Activated naive CD4-positive, alpha-beta T cell treated with anti-CD3 and anti-CD28 coated beads for 36 hours (primary cell): ENCODE measurements at regions of chr9 and their contacts with region 1.

Region 1: DNA sequence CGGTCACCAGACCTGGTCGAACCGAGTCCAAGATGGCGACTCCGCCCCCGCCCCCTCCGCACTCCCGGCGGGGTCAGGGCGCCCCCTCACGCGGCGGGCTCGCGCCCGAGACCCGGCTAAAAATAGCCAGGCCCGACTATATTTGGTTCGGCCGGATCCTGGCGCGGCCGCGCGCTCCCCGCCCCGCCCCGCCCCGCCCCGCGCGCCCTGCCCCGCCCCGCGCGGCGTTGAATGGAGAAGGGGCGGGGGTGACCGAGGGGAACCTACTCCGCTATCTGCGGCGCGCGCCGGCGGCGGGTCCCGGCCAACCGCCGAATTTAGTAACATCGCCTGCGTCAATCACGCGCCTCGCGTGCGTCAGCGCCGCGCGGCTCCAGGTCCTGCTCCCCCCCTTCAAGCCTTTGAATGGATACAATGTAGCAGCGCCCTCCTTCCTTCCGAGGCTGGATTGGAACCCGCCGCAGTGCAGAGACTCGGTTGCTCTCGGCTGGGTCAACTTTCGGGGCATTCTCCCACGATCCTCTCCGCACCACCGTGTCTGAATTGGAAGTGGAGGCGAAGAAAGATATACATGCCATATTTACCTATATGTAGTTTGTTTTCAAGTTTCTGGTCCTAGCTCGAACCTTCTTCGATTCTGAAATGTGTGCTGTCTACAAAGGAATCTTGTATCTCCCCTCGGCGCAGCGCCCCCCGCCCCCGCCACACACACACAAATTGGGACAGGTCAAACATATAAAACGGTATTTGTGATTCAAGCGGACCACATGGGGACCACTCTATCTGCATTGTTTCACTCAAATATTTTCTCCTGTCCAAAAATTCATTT is 1.6 kb upstream of the NR4A3 start:
- DNase-seq: peak; percentile 91
- H3K4me3 Mint-ChIP-seq: peak overlapping the region; percentile 94
- H3K27ac Mint-ChIP-seq: peak overlapping the region; percentile 91
- H3K4me1 Mint-ChIP-seq: peaks cover 45% of the 10 kb centered on the region
- H3K27me3 Mint-ChIP-seq: peaks cover 17% of the 10 kb centered on the region

Region 2: DNA sequence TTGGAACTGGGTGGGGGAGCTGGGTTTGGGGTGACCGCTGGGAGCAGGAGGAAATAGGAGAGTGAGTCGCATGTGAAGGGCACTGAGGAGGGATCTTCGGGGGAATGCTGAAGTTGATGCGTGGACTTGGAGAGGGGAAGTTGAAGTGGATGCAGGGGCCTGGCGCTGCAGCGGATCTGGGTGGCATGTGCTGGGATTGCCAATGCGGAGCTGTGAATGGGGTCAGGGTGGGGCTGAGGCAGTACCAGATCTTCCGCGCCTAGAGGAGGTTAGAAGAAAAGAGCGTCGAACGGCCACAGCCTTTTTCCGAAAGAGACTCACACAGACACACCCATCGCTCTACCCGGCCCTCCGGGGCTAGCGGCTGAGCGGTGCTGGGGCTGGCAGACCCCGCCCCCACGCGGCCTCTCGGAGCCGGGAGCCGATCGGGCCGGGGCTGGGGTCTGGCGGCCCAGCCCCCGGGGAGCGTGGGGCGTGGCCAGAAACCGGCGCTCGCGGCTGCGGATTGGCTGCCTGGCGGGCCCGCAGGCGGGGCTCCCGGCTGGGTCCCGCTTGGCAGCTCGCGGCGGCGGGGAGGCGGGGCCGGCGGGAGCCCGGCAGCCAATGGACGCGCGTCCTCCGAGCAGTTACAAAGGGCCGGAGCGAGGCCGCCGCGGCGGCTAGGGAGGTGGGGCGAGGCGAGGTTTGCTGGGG is 715.5 kb before region 1 on chr9 and contains the start of gene TGFBR1:
- CTCF ChIA-PET with region 1: no interaction called
- intact Hi-C with region 1: loop called (anchors 5 kb)
- DNase-seq: peak; percentile 89
- H3K4me3 Mint-ChIP-seq: peak within 1 kb of the TSS; percentile 89
- H3K27ac Mint-ChIP-seq: peak within 1 kb of the TSS; percentile 80
- H3K4me1 Mint-ChIP-seq: peaks cover 45% of the 10 kb centered on the region
- H3K27me3 Mint-ChIP-seq: no peaks in the 10 kb centered on the region
- total RNA-seq, gene TGFBR1: 13.7 to 16.9 TPM

Region 3: GRCh38 chr9:99253772-99254431 is 566.2 kb before region 1 on chr9:
- CTCF ChIA-PET with region 1: no interaction called
- intact Hi-C with region 1: loop called (anchors 1 kb)
- DNase-seq: peak; percentile 96
- H3K4me3 Mint-ChIP-seq: peak overlapping the region; percentile 44
- H3K27ac Mint-ChIP-seq: peak overlapping the region; percentile 84
- H3K4me1 Mint-ChIP-seq: peaks cover 34% of the 10 kb centered on the region
- H3K27me3 Mint-ChIP-seq: peaks cover 18% of the 10 kb centered on the region

Region 4: DNA sequence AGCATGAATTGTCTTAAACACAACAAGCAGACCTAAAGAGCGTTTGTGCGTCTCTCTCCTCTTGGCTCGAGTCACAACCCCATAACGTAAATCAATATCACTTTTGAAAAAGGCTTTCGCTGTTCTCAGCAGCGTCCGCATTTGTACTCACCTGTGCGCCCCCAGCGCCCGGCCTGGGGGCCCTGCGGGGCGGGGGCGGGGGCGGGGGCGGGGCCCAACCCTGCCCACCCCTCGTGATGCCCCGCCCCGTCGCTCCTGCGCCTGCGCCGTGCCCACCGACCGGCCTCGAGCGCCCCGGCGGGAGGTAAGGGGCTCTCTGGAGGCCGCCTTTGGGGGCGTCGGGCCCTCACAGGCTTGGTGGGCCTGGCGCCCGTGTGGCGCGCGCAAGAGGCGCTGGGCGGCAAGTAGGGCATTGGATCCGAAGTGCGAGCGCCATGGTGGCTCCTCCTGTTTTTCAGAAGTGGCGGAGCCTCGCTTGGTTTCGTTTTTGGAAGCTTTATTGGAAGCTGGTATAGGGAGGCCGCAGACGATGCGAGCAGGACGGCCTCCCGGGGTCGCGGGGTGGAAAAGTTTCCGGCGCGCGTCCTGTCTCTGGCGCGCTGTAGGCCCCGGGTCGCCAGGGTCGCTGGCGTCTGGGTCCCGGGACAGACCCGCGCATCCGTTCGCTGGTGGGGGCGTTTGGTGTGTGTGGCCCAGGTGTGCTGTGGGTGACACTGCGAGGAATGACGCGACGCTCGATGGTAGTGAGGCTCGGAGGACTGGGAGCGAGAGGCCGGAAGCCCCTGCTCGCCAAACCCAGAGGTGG is 86.5 kb after region 1 on chr9 and contains the start of gene STX17:
- CTCF ChIA-PET with region 1: interaction called, 8 read pairs
- intact Hi-C with region 1: loop called (anchors 2 kb)
- DNase-seq: peak; percentile 75
- H3K4me3 Mint-ChIP-seq: peak within 1 kb of the TSS; percentile 95
- H3K27ac Mint-ChIP-seq: peak within 1 kb of the TSS; percentile 95
- H3K4me1 Mint-ChIP-seq: peaks cover 22% of the 10 kb centered on the region
- H3K27me3 Mint-ChIP-seq: no peaks in the 10 kb centered on the region
- total RNA-seq, gene STX17: 28.1 to 31.6 TPM

Region 5: DNA sequence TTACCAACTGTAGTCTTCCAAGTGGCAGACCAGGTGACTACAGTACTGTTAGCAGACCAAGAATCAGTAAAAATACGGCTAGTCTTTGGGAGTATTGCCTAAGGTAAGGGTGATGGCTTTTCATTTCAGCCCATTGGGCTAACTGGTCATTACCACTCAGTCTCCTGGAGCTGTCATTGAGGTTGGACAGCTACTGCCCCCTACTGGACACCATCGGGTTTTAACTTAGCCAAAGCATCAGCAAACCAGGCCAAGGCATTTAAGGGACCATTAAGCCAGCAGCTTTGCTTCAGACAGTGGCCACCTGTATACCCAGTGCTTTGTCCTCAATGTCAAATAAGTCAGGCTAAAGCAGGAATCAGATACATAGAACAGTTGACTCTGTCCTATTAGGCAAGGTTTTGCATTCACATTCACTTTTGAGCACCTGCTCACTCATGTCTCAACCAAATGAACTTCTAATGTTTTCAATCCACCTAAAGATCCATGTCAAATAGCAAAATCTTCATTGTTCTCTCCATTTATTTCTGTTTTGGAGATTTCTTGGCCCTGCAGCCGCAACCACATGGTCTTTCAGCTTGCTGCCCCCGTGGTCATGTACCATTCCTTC is 396.2 kb after region 1 on chr9:
- CTCF ChIA-PET with region 1: no interaction called
- intact Hi-C with region 1: loop called (anchors 5 kb)
- DNase-seq: peak; percentile 83
- H3K4me3 Mint-ChIP-seq: no peak overlapping the region
- H3K27ac Mint-ChIP-seq: no peak overlapping the region
- H3K4me1 Mint-ChIP-seq: no peaks in the 10 kb centered on the region
- H3K27me3 Mint-ChIP-seq: no peaks in the 10 kb centered on the region

Region 6: DNA sequence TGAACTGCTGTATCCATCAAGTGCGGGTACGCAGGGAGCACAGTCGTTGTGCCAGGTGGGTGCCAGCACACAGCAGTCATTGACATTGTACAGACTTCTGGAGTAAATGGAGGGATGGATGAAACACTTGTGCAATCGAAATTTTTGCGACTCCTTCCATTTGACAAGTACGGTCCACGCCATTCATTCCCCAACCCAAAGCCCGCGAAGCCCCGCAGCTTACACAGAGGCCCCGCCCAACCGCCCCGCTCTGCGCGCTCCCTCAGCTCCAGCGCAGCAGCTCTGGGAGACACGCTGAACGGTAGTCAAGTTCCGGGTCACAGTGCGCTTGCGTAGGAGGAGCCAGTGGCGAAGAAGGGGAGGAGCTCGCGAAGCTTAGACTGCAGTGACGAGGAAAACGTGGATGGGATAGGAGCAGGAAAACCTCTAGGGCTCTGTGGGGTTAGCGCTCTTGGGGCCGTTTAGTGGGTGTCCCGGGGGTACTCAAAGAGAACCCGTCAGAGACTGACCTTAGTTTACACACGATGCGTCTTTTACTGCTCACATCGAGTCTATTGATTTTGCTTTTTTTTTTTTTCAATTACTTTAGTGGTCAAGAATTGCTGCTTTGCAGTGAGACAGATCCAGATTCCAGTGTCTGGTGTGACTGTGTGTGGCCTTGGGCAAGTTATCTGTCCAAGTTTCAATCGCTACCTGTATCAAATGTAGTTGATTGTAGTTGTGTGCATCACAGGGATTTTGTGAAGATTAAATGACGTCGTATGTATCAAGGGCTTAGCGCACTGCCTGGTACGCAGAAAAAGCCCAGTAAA is 591.6 kb after region 1 on chr9:
- CTCF ChIA-PET with region 1: no interaction called
- intact Hi-C with region 1: loop called (anchors 5 kb)
- DNase-seq: peak; percentile 93
- H3K4me3 Mint-ChIP-seq: peak overlapping the region; percentile 82
- H3K27ac Mint-ChIP-seq: peak overlapping the region; percentile 32
- H3K4me1 Mint-ChIP-seq: peaks cover 13% of the 10 kb centered on the region
- H3K27me3 Mint-ChIP-seq: peaks cover 17% of the 10 kb centered on the region

Region 7: GRCh38 chr9:101533334-101534107 is 1713.5 kb after region 1 on chr9 and contains the start of gene RNF20:
- CTCF ChIA-PET with region 1: no interaction called
- intact Hi-C with region 1: loop called (anchors 5 kb)
- DNase-seq: peak; percentile 100
- H3K4me3 Mint-ChIP-seq: peak within 1 kb of the TSS; percentile 79
- H3K27ac Mint-ChIP-seq: peak within 1 kb of the TSS; percentile 93
- H3K4me1 Mint-ChIP-seq: peaks cover 14% of the 10 kb centered on the region
- H3K27me3 Mint-ChIP-seq: peaks cover 5% of the 10 kb centered on the region
- total RNA-seq, gene RNF20: 42.0 to 45.9 TPM